A673 (cell line): ENCODE measurements at regions of chr22 and their contacts with region 1.

Region 1: GRCh38 chr22:41913040-41913719 is 1.7 kb downstream of the SHISA8 start:
- DNase-seq: no peak
- H3K4me3 ChIP-seq: no peak overlapping the region
- H3K27ac ChIP-seq: no peak overlapping the region
- H3K4me1 ChIP-seq: peaks cover 31% of the 10 kb centered on the region
- H3K27me3 ChIP-seq: peaks cover 42% of the 10 kb centered on the region
- CTCF ChIP-seq: no peak

Region 2: DNA sequence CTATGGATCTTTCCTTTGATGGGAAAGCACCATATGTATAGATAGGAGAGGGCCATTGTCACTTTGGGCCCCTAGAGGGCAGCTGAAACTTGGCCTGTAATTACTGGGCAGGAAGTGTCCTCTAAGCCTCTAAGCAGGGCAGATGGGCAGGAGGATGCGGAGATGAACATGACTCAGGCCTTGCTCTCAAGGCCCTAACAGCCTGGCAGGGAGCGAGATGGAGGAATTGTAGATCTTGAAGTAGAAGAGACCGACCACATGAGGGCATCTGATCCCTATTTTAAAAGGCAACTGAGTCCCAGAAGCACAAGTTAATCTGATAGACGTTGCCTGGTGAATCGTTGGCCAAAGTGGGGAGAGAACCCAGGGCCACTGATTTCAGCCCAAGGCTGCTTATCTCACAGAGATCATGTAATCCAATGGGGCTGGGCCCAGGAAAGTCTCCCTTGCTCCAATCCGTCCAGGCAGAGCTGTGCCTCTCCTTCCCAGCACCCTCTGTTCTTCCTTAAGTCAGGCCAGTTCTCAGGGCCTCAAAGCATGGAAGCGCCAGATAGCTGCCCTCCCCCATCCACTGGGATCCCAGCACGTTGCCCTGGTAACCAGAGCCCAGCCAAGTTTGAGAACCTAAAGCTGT is 53.5 kb after region 1 on chr22:
- CTCF ChIA-PET with region 1: no interaction called
- POLR2A ChIA-PET with region 1: interaction called, 26 read pairs
- intact Hi-C with region 1: no loop called
- DNase-seq: peak; percentile 79
- H3K4me3 ChIP-seq: no peak overlapping the region
- H3K27ac ChIP-seq: no peak overlapping the region
- H3K4me1 ChIP-seq: peaks cover 12% of the 10 kb centered on the region
- H3K27me3 ChIP-seq: no peaks in the 10 kb centered on the region
- CTCF ChIP-seq: peak; percentile 60

Region 3: GRCh38 chr22:42688241-42689211 is 775.3 kb after region 1 on chr22:
- CTCF ChIA-PET with region 1: no interaction called
- POLR2A ChIA-PET with region 1: interaction called, 11 read pairs
- intact Hi-C with region 1: no loop called
- DNase-seq: peak; percentile 88
- H3K4me3 ChIP-seq: peak overlapping the region; percentile 5
- H3K27ac ChIP-seq: peak overlapping the region; percentile 79
- H3K4me1 ChIP-seq: peaks cover 35% of the 10 kb centered on the region
- H3K27me3 ChIP-seq: no peaks in the 10 kb centered on the region
- CTCF ChIP-seq: no peak